Breast epithelium (tissue), 4 donors: ENCODE measurements at regions of chr11 and their contacts with region 1.

Region 1: GRCh38 chr11:60265373-60266214 is 14.9 kb upstream of the MS4A4A start:
- DNase-seq: no peak
- H3K4me3 ChIP-seq: no peak overlapping the region
- H3K27ac ChIP-seq: no peak overlapping the region
- H3K4me1 ChIP-seq: no peaks in the 10 kb centered on the region
- H3K27me3 ChIP-seq: no peaks in the 10 kb centered on the region
- CTCF ChIP-seq: peak; percentile 32 to 57 (median 56)
- POLR2A ChIP-seq: no peak

Region 2: GRCh38 chr11:60349990-60350389 is 84.4 kb after region 1 on chr11:
- intact Hi-C with region 1: no loop called
- DNase-seq: no peak
- H3K4me3 ChIP-seq: no peak overlapping the region
- H3K27ac ChIP-seq: no peak overlapping the region
- H3K4me1 ChIP-seq: no peaks in the 10 kb centered on the region
- H3K27me3 ChIP-seq: no peaks in the 10 kb centered on the region
- CTCF ChIP-seq: no peak
- POLR2A ChIP-seq: no peak

Region 3: GRCh38 chr11:60615497-60615896 is 349.9 kb after region 1 on chr11:
- intact Hi-C with region 1: loop called (anchors 10 kb)
- DNase-seq: no peak
- H3K4me3 ChIP-seq: no peak overlapping the region
- H3K27ac ChIP-seq: no peak overlapping the region
- H3K4me1 ChIP-seq: no peaks in the 10 kb centered on the region
- H3K27me3 ChIP-seq: peaks cover 0 to 2% of the 10 kb centered on the region in 2 donors
- CTCF ChIP-seq: no peak
- POLR2A ChIP-seq: no peak